ENCODE measurements at regions of chr4 and their contacts with region 1.

Region 1: GRCh38 chr4:175127314-175127713 is 209.2 kb downstream of the ADAM29 start:
- DNase-seq: peak; percentile 88
- ATAC-seq: peak; percentile 66
- H3K4me3 ChIP-seq: no peak overlapping the region
- H3K27ac ChIP-seq: peak overlapping the region; percentile 88
- H3K4me1 ChIP-seq: peaks cover 39% of the 10 kb centered on the region
- H3K27me3 ChIP-seq: no peaks in the 10 kb centered on the region
- CTCF ChIP-seq: no peak

Region 2: DNA sequence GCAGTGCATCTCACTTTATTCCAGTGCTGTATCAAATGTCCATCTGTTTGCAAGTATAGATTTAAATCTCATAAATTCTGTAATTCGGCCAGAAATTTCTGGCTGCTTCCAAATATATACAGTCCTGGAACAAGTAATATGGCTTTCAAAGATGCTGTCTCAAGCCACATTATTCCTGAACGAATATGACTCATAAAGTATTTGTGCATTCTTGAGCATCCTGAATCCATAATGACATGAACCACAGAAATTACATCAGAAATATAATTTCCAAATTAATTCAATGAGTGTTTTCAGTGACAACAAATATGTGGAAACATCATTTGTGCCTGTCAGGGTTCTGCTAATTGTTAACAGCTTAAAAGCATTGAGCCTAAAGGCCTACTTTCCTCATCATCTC is 464.1 kb before region 1 on chr4:
- CTCF ChIA-PET with region 1: no interaction called
- POLR2A ChIA-PET with region 1: no interaction called
- intact Hi-C with region 1: no loop called
- DNase-seq: peak; percentile 16
- ATAC-seq: no peak
- H3K4me3 ChIP-seq: no peak overlapping the region
- H3K27ac ChIP-seq: no peak overlapping the region
- H3K4me1 ChIP-seq: no peaks in the 10 kb centered on the region; the same call in 1 of the 2 replicates
- H3K27me3 ChIP-seq: no peaks in the 10 kb centered on the region
- CTCF ChIP-seq: no peak

Region 3: GRCh38 chr4:174764105-174764729 is 363.1 kb before region 1 on chr4:
- CTCF ChIA-PET with region 1: interaction called, 4 read pairs
- POLR2A ChIA-PET with region 1: no interaction called
- intact Hi-C with region 1: loop called (anchors 10 kb)
- DNase-seq: peak; percentile 62
- ATAC-seq: peak; percentile 56
- H3K4me3 ChIP-seq: no peak overlapping the region
- H3K27ac ChIP-seq: no peak overlapping the region
- H3K4me1 ChIP-seq: peaks cover 9% of the 10 kb centered on the region
- H3K27me3 ChIP-seq: no peaks in the 10 kb centered on the region
- CTCF ChIP-seq: peak; percentile 76

Region 4: GRCh38 chr4:174999407-174999806 is 127.9 kb before region 1 on chr4:
- CTCF ChIA-PET with region 1: interaction called, 3 read pairs
- POLR2A ChIA-PET with region 1: no interaction called
- intact Hi-C with region 1: loop called (anchors 1 kb)
- DNase-seq: peak; percentile 76
- ATAC-seq: peak; percentile 92
- H3K4me3 ChIP-seq: no peak overlapping the region
- H3K27ac ChIP-seq: no peak overlapping the region
- H3K4me1 ChIP-seq: peaks cover 4% of the 10 kb centered on the region
- H3K27me3 ChIP-seq: no peaks in the 10 kb centered on the region
- CTCF ChIP-seq: no peak

Region 5: GRCh38 chr4:175198056-175198455 is 70.7 kb after region 1 on chr4:
- CTCF ChIA-PET with region 1: no interaction called
- POLR2A ChIA-PET with region 1: no interaction called
- intact Hi-C with region 1: loop called (anchors 2 kb)
- DNase-seq: peak; percentile 6
- ATAC-seq: no peak
- H3K4me3 ChIP-seq: peak overlapping the region; percentile 62; the same call in 1 of the 2 replicates
- H3K27ac ChIP-seq: no peak overlapping the region
- H3K4me1 ChIP-seq: peaks cover 29% of the 10 kb centered on the region
- H3K27me3 ChIP-seq: no peaks in the 10 kb centered on the region
- CTCF ChIP-seq: no peak

Region 6: DNA sequence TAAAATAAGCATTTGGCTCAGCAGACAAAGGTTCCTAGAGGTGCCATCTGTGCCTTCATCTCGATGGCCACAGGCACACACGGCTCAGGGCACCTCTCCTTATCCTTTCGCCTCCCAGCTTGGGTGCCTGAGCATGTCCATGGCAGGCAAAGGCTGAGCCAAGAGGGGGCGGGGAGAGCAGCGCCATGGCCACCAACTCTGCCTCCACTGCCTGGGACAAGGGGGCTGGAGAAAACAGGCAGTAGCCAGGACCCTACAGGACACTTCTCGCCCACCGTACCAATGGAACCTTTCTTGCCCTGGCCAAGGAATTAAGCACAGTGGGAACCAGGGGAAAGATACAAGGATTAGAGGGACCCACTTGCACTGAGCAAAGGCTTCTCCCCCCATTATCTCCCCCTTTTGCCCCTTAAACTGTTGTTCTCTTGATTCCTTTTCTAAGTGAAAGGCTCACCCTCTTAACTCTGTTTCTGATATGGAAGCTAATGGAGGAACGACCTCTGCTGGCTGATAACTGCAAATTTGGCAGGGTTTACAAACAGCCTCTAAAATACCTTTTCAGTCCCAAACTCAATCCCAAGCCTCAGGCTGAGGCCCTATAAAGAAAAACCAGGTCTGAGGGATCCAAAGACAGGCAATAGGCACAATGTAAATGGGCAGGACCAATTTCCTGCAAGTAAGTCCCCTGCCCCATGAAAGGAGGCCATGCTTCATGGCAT is 126.0 kb after region 1 on chr4:
- CTCF ChIA-PET with region 1: no interaction called
- POLR2A ChIA-PET with region 1: no interaction called
- intact Hi-C with region 1: loop called (anchors 5 kb)
- DNase-seq: peak; percentile 38
- ATAC-seq: 0 out of 2 replicates have a peak, but pooled peaks have one; percentile 37
- H3K4me3 ChIP-seq: no peak overlapping the region
- H3K27ac ChIP-seq: no peak overlapping the region
- H3K4me1 ChIP-seq: no peaks in the 10 kb centered on the region
- H3K27me3 ChIP-seq: no peaks in the 10 kb centered on the region
- CTCF ChIP-seq: peak; percentile 67

Region 7: GRCh38 chr4:175435381-175435783 is 308.1 kb after region 1 on chr4:
- CTCF ChIA-PET with region 1: no interaction called
- POLR2A ChIA-PET with region 1: no interaction called
- intact Hi-C with region 1: no loop called
- DNase-seq: no peak
- ATAC-seq: no peak
- H3K4me3 ChIP-seq: no peak overlapping the region
- H3K27ac ChIP-seq: no peak overlapping the region
- H3K4me1 ChIP-seq: no peaks in the 10 kb centered on the region
- H3K27me3 ChIP-seq: no peaks in the 10 kb centered on the region
- CTCF ChIP-seq: no peak

Region 8: DNA sequence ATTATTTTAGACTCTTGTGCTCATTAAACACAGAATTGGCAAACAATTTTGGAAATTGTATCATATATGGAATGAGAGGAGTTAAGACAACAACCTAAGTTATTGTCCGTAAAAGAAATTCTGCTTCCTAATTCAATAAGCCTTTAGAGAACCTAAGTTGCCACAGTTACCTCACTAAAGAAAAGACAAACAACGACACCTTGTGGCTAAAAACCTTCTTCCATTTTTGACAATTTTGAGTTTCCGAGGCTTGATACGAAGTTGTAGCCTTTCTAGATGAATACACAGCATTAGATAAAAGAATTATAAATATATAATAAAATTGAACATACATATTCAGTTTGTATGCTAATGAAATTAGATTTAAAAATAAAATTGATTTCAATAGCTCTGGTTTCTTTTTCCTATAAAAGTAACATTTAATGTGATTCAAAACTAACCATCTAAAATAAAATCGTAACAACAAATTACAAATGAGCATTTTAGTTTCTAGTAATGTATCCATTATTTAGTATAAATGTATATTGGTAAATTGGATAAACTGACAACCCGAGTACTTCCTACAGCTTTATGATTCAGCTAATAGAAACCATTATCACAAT is 409.6 kb after region 1 on chr4:
- CTCF ChIA-PET with region 1: no interaction called
- POLR2A ChIA-PET with region 1: no interaction called
- intact Hi-C with region 1: loop called (anchors 1 kb)
- DNase-seq: peak; percentile 84
- ATAC-seq: peak; percentile 50
- H3K4me3 ChIP-seq: no peak overlapping the region
- H3K27ac ChIP-seq: no peak overlapping the region
- H3K4me1 ChIP-seq: peaks cover 25% of the 10 kb centered on the region
- H3K27me3 ChIP-seq: no peaks in the 10 kb centered on the region
- CTCF ChIP-seq: peak; percentile 57

Measured in PC-3 (cell line).